ENCODE measurements at regions of chr20 and their contacts with region 1.

Region 1: GRCh38 chr20:46438156-46438750 is 31.8 kb upstream of the ELMO2 start:
- DNase-seq: peak; percentile 29 to 53
- H3K4me3 ChIP-seq: no peak overlapping the region
- H3K27ac ChIP-seq: no peak overlapping the region
- H3K4me1 ChIP-seq: no peaks in the 10 kb centered on the region
- H3K27me3 ChIP-seq: peaks cover 88% of the 10 kb centered on the region
- CTCF ChIP-seq: peak; percentile 62

Region 2: GRCh38 chr20:46202766-46203509 is 235.3 kb before region 1 on chr20:
- CTCF ChIA-PET with region 1: interaction called, 18 read pairs
- POLR2A ChIA-PET with region 1: no interaction called
- intact Hi-C with region 1: no loop called
- DNase-seq: no peak
- H3K4me3 ChIP-seq: no peak overlapping the region
- H3K27ac ChIP-seq: no peak overlapping the region
- H3K4me1 ChIP-seq: peaks cover 18% of the 10 kb centered on the region; the same call in 1 of the 2 replicates
- H3K27me3 ChIP-seq: peaks cover 43% of the 10 kb centered on the region
- CTCF ChIP-seq: no peak

Measured in PC-9 (cell line).